ENCODE measurements at regions of chr10 and their contacts with region 1.

Region 1: GRCh38 chr10:91908337-91909116 is 759 bp downstream of the FGFBP3 start:
- DNase-seq: peak; percentile 71 to 74
- H3K4me3 ChIP-seq: peak overlapping the region; percentile 72
- H3K27ac ChIP-seq: no peak overlapping the region
- H3K4me1 ChIP-seq: peaks cover 7% of the 10 kb centered on the region
- H3K27me3 ChIP-seq: no peaks in the 10 kb centered on the region
- CTCF ChIP-seq: no peak; the same call in 1 of the 2 replicates

Region 2: DNA sequence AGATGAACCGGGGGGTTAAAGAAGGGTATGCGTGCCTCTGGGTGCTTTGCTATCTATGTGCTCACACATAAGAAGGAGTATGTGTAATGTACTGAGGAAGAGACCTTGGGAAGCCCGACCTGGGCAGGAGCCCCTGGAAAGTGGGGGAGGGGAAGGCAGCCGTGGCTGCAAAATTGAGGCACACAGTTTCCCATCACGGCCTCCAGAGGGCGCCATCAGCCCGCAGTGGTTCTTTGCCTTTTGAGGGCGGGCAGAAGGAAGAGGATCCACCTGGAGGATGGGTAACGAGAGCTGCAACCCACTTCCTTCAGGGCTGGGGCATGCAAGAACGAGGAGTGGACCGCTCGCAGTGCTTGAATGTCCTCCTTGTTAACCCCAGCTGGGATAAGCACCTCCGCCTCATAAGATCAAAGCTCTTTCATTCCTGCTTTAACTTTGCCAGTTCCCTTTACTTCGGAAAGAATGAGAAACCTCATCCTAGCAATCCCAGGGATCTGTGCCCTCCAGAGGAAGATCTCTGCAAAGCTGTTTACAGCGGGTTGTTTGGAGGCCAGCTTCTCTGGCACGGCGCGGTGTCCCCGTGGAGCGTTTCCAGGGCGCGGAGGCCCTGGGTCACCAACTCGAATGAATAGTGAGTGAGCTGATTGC is 610.2 kb before region 1 on chr10:
- CTCF ChIA-PET with region 1: no interaction called
- POLR2A ChIA-PET with region 1: no interaction called
- intact Hi-C with region 1: loop called (anchors 1 kb)
- DNase-seq: peak; percentile 40 to 72
- H3K4me3 ChIP-seq: peak overlapping the region; percentile 24; the same call in 1 of the 2 replicates
- H3K27ac ChIP-seq: no peak overlapping the region
- H3K4me1 ChIP-seq: 0 out of 2 replicates have a peak, but pooled peaks cover 7% of the 10 kb centered on the region
- H3K27me3 ChIP-seq: no peaks in the 10 kb centered on the region
- CTCF ChIP-seq: peak; percentile 83

Region 3: DNA sequence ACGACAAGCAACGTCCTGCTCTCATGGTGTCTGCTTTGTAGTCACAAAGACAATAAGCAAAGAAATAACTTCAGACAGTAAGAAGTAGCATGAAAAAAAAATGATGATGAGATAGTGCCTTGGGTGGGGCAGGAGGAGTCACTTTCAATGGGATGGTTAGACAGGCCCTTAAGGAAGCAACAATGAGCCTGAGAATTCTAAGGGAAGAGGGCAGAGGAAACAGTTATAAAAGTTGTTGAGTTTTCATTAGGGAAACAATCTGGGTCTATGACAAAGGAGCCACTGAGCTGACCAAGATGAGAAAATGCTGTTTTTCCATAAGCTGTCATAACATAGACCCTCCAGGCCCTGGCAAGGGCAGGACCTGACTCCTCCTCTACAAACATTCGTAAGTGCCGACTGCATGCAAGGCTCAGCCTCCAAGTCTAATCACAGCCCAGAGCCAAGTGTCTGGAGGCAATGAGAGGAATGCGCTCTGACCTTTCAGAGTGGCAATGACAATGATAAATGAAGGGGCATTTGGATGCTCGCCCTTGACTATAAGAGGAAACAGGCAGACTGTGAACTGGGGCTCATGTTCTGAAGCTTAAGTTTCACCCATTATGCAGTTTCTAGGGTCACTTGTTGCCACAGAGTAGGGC is 319.4 kb before region 1 on chr10:
- CTCF ChIA-PET with region 1: interaction called, 16 read pairs
- POLR2A ChIA-PET with region 1: no interaction called
- intact Hi-C with region 1: no loop called
- DNase-seq: peak in 1 of 2 experiments; percentile 42
- H3K4me3 ChIP-seq: no peak overlapping the region
- H3K27ac ChIP-seq: no peak overlapping the region
- H3K4me1 ChIP-seq: peaks cover 24% of the 10 kb centered on the region
- H3K27me3 ChIP-seq: no peaks in the 10 kb centered on the region
- CTCF ChIP-seq: no peak

Region 4: GRCh38 chr10:91856637-91857036 is 51.9 kb before region 1 on chr10:
- CTCF ChIA-PET with region 1: no interaction called
- POLR2A ChIA-PET with region 1: no interaction called
- intact Hi-C with region 1: loop called (anchors 5 kb)
- DNase-seq: no peak
- H3K4me3 ChIP-seq: no peak overlapping the region
- H3K27ac ChIP-seq: no peak overlapping the region
- H3K4me1 ChIP-seq: no peaks in the 10 kb centered on the region
- H3K27me3 ChIP-seq: no peaks in the 10 kb centered on the region
- CTCF ChIP-seq: peak; percentile 57

Region 5: DNA sequence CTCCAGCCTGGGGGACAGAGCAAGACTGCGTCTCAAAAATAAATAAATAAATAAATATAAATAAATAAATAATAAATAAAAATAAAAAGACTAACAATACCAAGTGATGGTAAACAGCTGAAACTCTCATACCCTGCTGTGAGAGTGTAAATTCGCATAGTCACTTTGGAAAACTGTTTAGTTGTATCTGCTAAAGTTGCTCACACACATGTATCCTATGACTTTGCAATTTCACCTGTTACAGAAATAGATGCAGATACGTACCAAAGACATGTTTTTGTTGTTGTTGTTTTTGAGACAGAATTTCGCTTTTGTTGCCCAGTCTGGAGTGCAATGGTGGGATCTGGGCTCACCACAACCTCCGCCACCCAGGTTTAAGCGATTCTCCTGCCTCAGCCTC is 529.7 kb after region 1 on chr10:
- CTCF ChIA-PET with region 1: no interaction called
- POLR2A ChIA-PET with region 1: interaction called, 11 read pairs
- intact Hi-C with region 1: loop called (anchors 10 kb)
- DNase-seq: no peak
- H3K4me3 ChIP-seq: no peak overlapping the region
- H3K27ac ChIP-seq: no peak overlapping the region
- H3K4me1 ChIP-seq: no peaks in the 10 kb centered on the region
- H3K27me3 ChIP-seq: no peaks in the 10 kb centered on the region
- CTCF ChIP-seq: no peak